WTC11 (cell line): ENCODE measurements at regions of chr19 and their contacts with region 1.

Region 1: GRCh38 chr19:7460562-7460966 is 28.3 kb downstream of the PEX11G start:
- DNase-seq: no peak
- ATAC-seq: no peak
- H3K4me3 Mint-ChIP-seq: no peak overlapping the region
- H3K27ac Mint-ChIP-seq: no peak overlapping the region
- H3K4me1 Mint-ChIP-seq: no peaks in the 10 kb centered on the region
- H3K27me3 Mint-ChIP-seq: no peaks in the 10 kb centered on the region; the same call in 1 of the 2 replicates
- CTCF ChIP-seq: no peak

Region 2: DNA sequence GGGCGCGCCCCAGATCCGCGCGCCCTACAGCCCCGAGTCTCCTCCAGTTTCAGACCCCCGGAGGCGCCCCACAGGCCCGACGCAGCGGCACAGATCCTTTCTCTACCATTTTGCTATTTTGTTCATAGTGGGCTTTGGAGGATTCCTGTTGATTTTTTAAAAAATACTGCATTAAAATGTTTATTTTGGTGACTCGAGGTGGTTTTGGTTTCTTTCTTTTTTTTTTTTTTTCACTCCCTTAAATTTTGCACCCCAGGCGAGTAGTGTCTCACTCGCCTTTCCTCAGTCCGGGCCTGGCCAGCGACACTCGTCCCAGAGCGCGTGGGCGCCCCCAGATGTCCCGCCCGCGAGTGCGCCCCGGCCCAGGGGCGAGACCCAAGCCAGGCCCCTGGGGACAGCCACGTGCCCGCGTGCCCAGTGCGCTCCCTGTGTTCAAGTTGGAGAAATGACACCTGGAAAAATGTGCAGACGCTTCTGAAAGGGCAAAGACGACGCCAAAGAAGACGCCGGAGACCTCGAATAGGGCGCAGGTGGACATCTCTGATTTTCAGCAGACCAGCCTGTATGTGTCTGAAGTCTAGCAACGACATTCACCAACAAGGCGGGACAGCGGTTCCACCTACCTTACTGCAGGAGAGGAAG is 165.9 kb before region 1 on chr19:
- CTCF ChIA-PET with region 1: no interaction called
- POLR2A ChIA-PET with region 1: no interaction called
- DNase-seq: peak; percentile 53
- ATAC-seq: no peak; the same call in 1 of the 2 replicates
- H3K4me3 Mint-ChIP-seq: peak overlapping the region; percentile 72
- H3K27ac Mint-ChIP-seq: no peak overlapping the region
- H3K4me1 Mint-ChIP-seq: peaks cover 21% of the 10 kb centered on the region
- H3K27me3 Mint-ChIP-seq: peaks cover 34% of the 10 kb centered on the region
- CTCF ChIP-seq: no peak

Region 3: GRCh38 chr19:7506385-7507328 is 46.1 kb after region 1 on chr19:
- CTCF ChIA-PET with region 1: interaction called, 12 read pairs
- POLR2A ChIA-PET with region 1: no interaction called
- DNase-seq: peak; percentile 99
- ATAC-seq: peak; percentile 88
- H3K4me3 Mint-ChIP-seq: peak overlapping the region; percentile 62
- H3K27ac Mint-ChIP-seq: peak overlapping the region; percentile 76
- H3K4me1 Mint-ChIP-seq: peaks cover 19% of the 10 kb centered on the region
- H3K27me3 Mint-ChIP-seq: peaks cover 48% of the 10 kb centered on the region
- CTCF ChIP-seq: no peak

Region 4: GRCh38 chr19:7590261-7590660 is 129.7 kb after region 1 on chr19:
- CTCF ChIA-PET with region 1: no interaction called
- POLR2A ChIA-PET with region 1: no interaction called
- DNase-seq: no peak
- ATAC-seq: peak; percentile 59
- H3K4me3 Mint-ChIP-seq: no peak overlapping the region
- H3K27ac Mint-ChIP-seq: no peak overlapping the region
- H3K4me1 Mint-ChIP-seq: peaks cover 2% of the 10 kb centered on the region
- H3K27me3 Mint-ChIP-seq: peaks cover 16% of the 10 kb centered on the region
- CTCF ChIP-seq: no peak